ENCODE measurements at regions of chr22 and their contacts with region 1.

Region 1: DNA sequence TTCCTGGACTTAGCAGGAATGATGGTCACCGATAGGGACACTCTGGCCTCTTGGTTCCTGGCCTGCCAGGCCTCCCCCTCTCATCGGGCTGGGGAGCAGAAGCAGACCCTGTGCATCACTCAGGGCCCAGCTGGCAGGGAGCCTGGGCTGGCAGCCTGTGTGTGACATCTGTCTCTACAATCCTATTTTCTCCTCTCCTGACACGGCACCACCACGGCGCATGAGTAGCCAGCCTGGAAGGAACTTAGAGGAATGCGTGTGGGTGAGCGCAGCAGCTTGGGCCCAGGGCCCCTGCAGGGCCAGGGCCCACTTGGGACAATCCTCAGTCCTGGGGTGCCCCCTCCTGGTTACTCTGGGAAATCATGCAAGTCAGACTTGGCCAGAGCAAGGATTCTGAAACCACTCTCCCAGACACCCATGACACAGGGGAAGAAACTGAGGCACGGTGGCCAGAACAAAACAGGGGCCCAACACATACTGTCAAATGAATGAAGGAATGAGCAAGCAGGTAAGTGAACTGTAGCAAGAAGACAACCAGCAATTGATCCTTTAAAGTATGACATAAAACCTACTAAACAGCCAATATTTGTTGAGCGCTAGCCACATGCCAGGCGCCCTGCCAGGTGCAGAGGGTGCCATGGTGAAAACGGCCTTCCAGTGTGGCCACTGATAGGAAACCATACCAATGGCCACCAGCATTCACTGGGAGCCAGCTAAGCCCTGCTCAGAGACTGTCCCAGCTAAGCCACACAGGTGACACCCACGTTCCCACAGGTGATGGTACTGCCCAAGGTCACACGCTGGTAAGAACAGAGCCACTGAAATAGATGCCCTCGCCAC is 13.3 kb downstream of the RSPH14 start:
- DNase-seq: peak; percentile 88
- H3K4me3 ChIP-seq: no peak overlapping the region
- H3K27ac ChIP-seq: no peak overlapping the region
- H3K4me1 ChIP-seq: no peaks in the 10 kb centered on the region
- H3K27me3 ChIP-seq: 0 out of 2 replicates have a peak, but pooled peaks cover 5% of the 10 kb centered on the region

Region 2: DNA sequence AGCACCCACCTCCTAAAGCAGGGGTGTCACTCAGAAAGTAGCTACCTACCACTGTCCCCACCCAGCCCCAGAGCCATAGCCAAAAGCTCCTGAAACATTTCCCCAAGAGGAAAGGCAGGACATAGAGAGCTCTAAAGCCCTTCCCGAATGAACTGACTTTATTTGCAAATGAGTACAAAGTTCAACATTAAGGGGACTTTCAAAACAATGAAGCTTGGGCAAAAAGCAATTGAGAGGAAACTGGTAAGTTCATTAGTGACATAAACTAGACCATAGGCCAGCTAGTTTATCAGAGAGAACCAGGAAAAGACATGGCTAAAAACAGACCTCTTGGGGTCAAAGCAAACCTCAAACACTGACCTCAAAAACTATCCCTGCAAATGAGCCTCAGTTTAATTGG is 168.2 kb before region 1 on chr22:
- in situ Hi-C with region 1: loop called (anchors 5 kb)
- DNase-seq: no peak
- H3K4me3 ChIP-seq: no peak overlapping the region
- H3K27ac ChIP-seq: no peak overlapping the region
- H3K4me1 ChIP-seq: no peaks in the 10 kb centered on the region
- H3K27me3 ChIP-seq: peaks cover 5% of the 10 kb centered on the region; the same call in 1 of the 2 replicates